ENCODE measurements at regions of chr10 and their contacts with region 1.

Region 1: GRCh38 chr10:68212721-68213352 is 19.1 kb downstream of the ATOH7 start:
- DNase-seq: no peak
- H3K4me3 ChIP-seq: no peak overlapping the region
- H3K27ac ChIP-seq: no peak overlapping the region
- H3K4me1 ChIP-seq: no peaks in the 10 kb centered on the region
- H3K27me3 ChIP-seq: no peaks in the 10 kb centered on the region
- CTCF ChIP-seq: peak; percentile 46 to 59 (median 58)
- EP300 ChIP-seq: no peak
- POLR2A ChIP-seq: no peak

Region 2: DNA sequence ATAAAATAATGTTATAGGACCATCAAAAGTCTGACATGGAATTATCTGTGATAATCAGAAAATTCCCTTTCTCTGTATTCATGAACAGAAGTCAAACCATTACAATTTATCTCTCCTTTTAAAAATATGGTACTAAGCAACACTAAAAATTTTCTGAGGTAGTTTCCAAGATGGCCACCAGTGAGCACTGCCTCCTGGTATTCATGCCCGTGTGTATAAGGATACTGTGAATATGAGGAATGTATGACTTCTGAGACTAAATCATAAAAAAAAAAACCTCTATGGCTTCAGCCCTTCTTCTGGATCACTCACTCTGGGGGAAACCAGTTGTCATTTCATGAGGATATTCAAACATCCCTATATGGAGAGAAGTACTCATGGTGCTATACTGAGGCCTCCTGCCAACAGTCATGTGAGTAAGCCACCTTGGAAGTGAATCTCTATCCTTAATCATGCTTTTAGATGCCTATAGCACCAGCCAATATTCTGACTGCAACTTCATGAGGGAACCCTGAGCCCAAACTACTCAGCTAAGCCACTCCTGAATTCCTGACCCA is 287.3 kb before region 1 on chr10:
- intact Hi-C with region 1: no loop called
- DNase-seq: no peak
- H3K4me3 ChIP-seq: no peak overlapping the region
- H3K27ac ChIP-seq: no peak overlapping the region
- H3K4me1 ChIP-seq: no peaks in the 10 kb centered on the region
- H3K27me3 ChIP-seq: no peaks in the 10 kb centered on the region
- CTCF ChIP-seq: no peak
- EP300 ChIP-seq: no peak
- POLR2A ChIP-seq: no peak

Region 3: GRCh38 chr10:68251625-68252495 is 39.0 kb after region 1 on chr10:
- intact Hi-C with region 1: no loop called
- DNase-seq: no peak
- H3K4me3 ChIP-seq: no peak overlapping the region
- H3K27ac ChIP-seq: no peak overlapping the region
- H3K4me1 ChIP-seq: no peaks in the 10 kb centered on the region
- H3K27me3 ChIP-seq: no peaks in the 10 kb centered on the region
- CTCF ChIP-seq: no peak
- EP300 ChIP-seq: no peak
- POLR2A ChIP-seq: no peak

Region 4: GRCh38 chr10:68301790-68302502 is 89.1 kb after region 1 on chr10:
- intact Hi-C with region 1: loop called (anchors 2 kb)
- DNase-seq: no peak
- H3K4me3 ChIP-seq: no peak overlapping the region
- H3K27ac ChIP-seq: no peak overlapping the region
- H3K4me1 ChIP-seq: peaks cover 3 to 11% (median 8%) of the 10 kb centered on the region in 4 donors
- H3K27me3 ChIP-seq: no peaks in the 10 kb centered on the region
- CTCF ChIP-seq: peak; percentile 52 to 60 (median 58)
- EP300 ChIP-seq: no peak
- POLR2A ChIP-seq: no peak